Left cardiac atrium (tissue), 4 donors: ENCODE measurements at regions of chr1 and their contacts with region 1.

Region 1: DNA sequence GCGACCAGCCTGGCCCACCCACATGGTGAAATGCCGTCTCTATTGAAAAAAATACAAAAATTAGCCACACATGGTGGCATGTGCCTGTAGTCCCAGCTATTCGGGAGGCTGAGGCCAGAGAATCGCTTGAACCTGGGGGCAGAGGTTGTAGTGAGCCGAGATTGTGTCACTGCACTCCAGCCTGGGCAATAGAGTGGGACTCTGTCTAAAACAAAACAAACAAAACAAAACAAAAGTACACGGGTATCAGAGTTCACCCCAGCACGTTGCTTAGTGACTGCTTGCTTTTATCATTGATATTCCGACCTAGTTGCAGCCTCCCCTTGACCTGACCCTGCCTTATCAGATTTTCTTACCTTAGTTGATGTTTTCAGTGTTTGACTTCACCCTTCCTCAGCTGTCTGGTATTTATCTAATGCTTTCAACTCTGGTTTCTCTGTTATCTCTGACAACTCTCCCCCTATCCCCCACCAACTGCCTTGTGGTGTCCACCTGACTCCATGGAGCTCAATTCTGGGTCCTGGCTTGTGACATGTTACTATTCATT is 5.1 kb downstream of the TLCD4 start:
- DNase-seq: no peak
- ATAC-seq: no peak

Region 2: GRCh38 chr1:95197616-95198252 is 75.5 kb after region 1 on chr1:
- intact Hi-C with region 1: loop called in 1 of 2 experiments (anchors 10 kb)
- DNase-seq: no peak
- ATAC-seq: peak; percentile 66 to 83

Region 3: GRCh38 chr1:95957748-95958147 is 835.5 kb after region 1 on chr1:
- intact Hi-C with region 1: no loop called
- DNase-seq: no peak
- ATAC-seq: no peak